ENCODE measurements at regions of chr15 and their contacts with region 1.

Region 1: GRCh38 chr15:33737687-33738601 is 230.4 kb upstream of the CHRM5 start:
- DNase-seq: peak; percentile 49
- H3K4me3 ChIP-seq: no peak overlapping the region
- H3K27ac ChIP-seq: no peak overlapping the region
- H3K4me1 ChIP-seq: no peaks in the 10 kb centered on the region
- H3K27me3 ChIP-seq: no peaks in the 10 kb centered on the region
- CTCF ChIP-seq: peak; percentile 80
- POLR2A ChIP-seq: no peak

Region 2: DNA sequence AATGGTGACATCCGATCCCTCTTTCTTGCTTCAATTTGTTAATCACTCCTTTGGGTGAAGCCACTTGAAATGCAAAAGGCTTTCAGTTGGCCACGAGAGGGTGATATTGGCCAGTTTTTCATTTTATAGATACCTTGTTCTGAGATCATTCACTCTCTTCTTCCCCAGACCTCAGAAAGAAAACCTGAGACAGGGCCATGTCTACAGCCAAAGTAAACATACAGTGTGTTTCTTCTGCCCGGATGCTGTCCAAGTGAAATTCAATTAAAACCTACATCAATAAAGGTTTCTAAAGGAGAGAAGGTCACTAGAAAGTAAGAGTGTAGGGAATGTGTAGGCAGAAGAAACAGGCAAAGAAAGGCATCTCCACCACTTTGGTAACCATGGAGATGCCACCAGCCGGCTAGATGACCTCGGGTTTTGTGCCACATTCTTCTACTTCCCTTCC is 503.9 kb before region 1 on chr15:
- CTCF ChIA-PET with region 1: interaction called, 6 read pairs
- POLR2A ChIA-PET with region 1: no interaction called
- dilution Hi-C with region 1: no loop called
- intact Hi-C with region 1: loop called (anchors 2 kb)
- DNase-seq: peak; percentile 41
- H3K4me3 ChIP-seq: no peak overlapping the region
- H3K27ac ChIP-seq: no peak overlapping the region
- H3K4me1 ChIP-seq: no peaks in the 10 kb centered on the region
- H3K27me3 ChIP-seq: peaks cover 9% of the 10 kb centered on the region in 2 experiments
- CTCF ChIP-seq: peak; percentile 21 to 39
- POLR2A ChIP-seq: no peak

Region 3: GRCh38 chr15:33641069-33641468 is 96.9 kb before region 1 on chr15:
- CTCF ChIA-PET with region 1: no interaction called
- POLR2A ChIA-PET with region 1: no interaction called
- dilution Hi-C with region 1: no loop called
- intact Hi-C with region 1: no loop called
- DNase-seq: no peak
- H3K4me3 ChIP-seq: no peak overlapping the region
- H3K27ac ChIP-seq: no peak overlapping the region
- H3K4me1 ChIP-seq: no peaks in the 10 kb centered on the region
- H3K27me3 ChIP-seq: peaks cover 4 to 10% of the 10 kb centered on the region in 2 experiments
- CTCF ChIP-seq: no peak
- POLR2A ChIP-seq: no peak

Region 4: DNA sequence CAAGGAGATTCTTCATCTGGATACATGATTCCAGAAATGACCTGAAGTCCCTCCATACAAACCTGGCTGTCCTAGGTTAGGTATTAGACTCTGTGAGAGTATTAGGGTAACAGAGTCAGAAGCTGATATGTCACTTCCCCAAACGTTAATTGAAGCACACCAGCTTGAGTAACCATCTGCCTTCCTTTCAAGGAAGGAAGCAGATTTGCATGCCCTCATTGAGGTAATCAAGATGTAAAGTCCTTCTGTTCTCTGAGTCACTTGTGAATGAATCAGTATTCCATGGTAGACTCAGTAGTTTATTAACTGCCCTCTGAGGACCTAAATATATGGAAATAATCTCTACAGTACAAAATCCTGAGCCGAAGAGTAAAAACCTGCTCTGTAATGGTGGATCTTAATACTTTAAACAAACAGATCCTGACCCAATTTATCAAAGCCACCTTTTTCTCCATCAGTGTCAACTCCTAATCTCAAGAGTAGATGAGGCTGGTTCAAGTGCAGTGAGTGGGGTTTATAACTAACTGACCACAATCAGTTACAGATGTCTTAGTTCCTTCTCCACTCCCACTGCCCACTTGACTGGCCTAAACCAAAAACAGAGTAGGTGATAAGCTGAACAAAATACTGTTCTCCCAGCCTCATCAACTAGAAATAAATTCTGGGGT is 15.8 kb before region 1 on chr15:
- CTCF ChIA-PET with region 1: interaction called, 28 read pairs
- POLR2A ChIA-PET with region 1: no interaction called
- dilution Hi-C with region 1: no loop called
- intact Hi-C with region 1: no loop called
- DNase-seq: peak; percentile 78
- H3K4me3 ChIP-seq: no peak overlapping the region
- H3K27ac ChIP-seq: peak overlapping the region; percentile 96
- H3K4me1 ChIP-seq: peaks cover 51% of the 10 kb centered on the region
- H3K27me3 ChIP-seq: no peaks in the 10 kb centered on the region
- CTCF ChIP-seq: no peak
- POLR2A ChIP-seq: no peak

Region 5: DNA sequence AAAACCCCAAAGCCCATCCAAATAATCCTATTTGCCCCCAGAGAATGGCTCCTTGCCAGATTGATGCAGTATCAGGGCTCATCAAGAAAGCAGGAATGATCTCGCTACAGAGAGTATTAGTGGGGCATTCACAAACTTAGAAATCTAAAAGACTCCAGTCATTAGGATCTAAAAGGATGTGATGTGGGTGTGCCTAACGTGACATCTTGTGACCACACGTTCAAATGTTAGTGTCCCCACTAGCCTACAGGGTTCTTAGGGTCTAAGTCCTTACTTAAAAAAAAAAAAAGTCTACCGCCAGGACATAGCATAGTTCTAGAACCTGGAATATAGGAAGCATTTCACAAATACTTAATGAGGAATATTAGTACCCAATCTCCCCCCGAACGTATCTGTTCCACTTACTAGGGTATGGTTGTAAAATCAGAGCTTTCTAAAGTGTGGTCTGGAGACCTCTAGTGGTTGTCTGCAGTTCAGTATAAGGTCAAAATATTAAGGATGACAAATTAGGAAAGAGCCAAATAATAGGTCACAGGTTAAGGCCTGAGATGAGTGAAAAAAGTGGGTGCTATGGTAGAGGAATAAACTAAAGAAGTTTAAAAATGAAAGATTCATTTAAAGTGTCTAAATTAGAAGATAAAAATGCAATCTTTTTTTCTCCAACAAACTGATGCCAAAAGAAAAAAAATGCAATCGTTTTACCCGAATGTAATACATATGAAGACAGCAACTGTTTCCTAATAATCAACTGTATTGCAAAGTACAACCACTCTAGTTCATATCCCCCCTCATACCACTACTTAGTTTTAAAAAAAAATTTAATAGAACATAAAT is 226.1 kb after region 1 on chr15:
- CTCF ChIA-PET with region 1: interaction called, 14 read pairs
- POLR2A ChIA-PET with region 1: no interaction called
- dilution Hi-C with region 1: no loop called
- intact Hi-C with region 1: loop called (anchors 1 kb)
- DNase-seq: peak; percentile 44
- H3K4me3 ChIP-seq: no peak overlapping the region
- H3K27ac ChIP-seq: no peak overlapping the region
- H3K4me1 ChIP-seq: peaks cover 3% of the 10 kb centered on the region
- H3K27me3 ChIP-seq: no peaks in the 10 kb centered on the region
- CTCF ChIP-seq: peak; percentile 34 to 45
- POLR2A ChIP-seq: no peak

Region 6: GRCh38 chr15:33994005-33994615 is 256.2 kb after region 1 on chr15:
- CTCF ChIA-PET with region 1: interaction called, 14 read pairs
- POLR2A ChIA-PET with region 1: no interaction called
- dilution Hi-C with region 1: no loop called
- intact Hi-C with region 1: loop called (anchors 1 kb)
- DNase-seq: peak; percentile 32
- H3K4me3 ChIP-seq: no peak overlapping the region
- H3K27ac ChIP-seq: no peak overlapping the region
- H3K4me1 ChIP-seq: no peaks in the 10 kb centered on the region
- H3K27me3 ChIP-seq: no peaks in the 10 kb centered on the region
- CTCF ChIP-seq: peak in 1 of 2 donors; percentile 43
- POLR2A ChIP-seq: no peak

Measured in endothelial cell of umbilical vein (primary cell).